ENCODE measurements at regions of chr17 and their contacts with region 1.

Region 1: GRCh38 chr17:79393358-79394202 is 217.3 kb downstream of the RBFOX3 start:
- DNase-seq: peak; percentile 43
- H3K4me3 ChIP-seq: no peak overlapping the region
- H3K27ac ChIP-seq: no peak overlapping the region
- H3K4me1 ChIP-seq: no peaks in the 10 kb centered on the region
- H3K27me3 ChIP-seq: peaks cover 5% of the 10 kb centered on the region
- CTCF ChIP-seq: peak; percentile 95 to 98

Region 2: DNA sequence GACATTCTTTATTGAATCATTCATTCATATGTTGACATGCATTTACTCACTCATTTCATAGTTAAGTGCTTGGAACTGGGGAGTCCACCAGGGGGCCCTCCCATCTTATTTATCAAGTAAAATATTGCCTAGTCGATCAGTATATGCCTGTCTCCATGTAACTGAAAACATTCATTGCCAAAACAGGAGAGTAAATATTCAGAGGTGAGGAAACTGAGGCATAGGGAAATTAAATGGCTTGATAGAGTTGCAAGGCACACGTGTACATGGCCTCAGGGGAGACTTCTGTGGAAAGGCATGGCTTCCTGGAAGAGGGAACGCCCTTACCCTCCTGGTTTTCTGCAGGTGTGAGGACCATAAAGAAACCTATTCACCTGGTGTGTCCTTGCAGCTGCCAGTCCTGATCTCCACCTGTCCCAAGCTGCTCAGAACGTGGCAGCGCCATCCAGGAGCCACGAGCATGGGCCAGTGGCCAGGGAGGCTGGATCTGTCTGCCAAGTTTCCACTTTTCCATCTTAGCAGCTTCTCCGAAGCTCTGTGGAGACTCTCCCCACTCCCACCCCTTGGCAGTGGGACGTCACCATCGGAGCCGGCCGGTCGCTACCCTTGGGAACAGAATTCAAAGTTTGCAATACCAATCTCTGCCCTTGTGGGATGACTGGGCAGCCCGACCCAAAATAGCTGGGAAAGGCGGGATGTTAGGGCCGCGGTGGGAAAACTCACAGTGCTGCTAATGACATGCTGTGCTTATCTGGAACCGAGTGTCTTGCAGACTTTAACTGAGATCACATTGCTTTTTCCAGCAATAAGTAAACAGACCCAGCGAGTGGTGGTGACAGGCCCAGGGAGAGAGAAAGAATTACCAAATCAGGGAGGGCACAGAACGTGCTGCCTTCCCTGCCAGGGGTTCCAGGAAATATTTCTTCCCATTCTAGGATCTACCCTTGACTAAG is 373.7 kb before region 1 on chr17:
- CTCF ChIA-PET with region 1: no interaction called
- dilution Hi-C with region 1: loop called (anchors 5 kb)
- in situ Hi-C with region 1: no loop called
- intact Hi-C with region 1: loop called (anchors 1 kb)
- DNase-seq: peak; percentile 53
- H3K4me3 ChIP-seq: no peak overlapping the region
- H3K27ac ChIP-seq: no peak overlapping the region
- H3K4me1 ChIP-seq: peaks cover 43% of the 10 kb centered on the region
- H3K27me3 ChIP-seq: no peaks in the 10 kb centered on the region
- CTCF ChIP-seq: peak; percentile 68 to 77

Region 3: DNA sequence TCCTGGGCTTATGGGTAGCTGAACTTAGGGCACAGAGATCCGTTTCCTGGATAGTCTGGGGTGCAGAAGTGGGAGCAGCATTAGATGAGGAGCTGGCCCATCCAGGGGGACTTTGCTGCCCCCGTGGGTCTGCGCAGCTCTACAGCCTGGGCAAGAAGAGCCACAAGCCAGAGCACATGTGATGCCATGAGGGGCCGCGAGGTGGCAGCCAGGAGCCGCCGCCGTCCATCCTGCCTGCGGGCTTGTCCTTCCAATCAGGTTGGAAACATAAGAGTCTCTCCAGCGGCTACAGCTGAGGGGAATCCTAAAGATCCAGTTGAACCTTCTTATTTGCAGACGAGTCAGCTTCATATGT is 347.8 kb before region 1 on chr17:
- CTCF ChIA-PET with region 1: no interaction called
- dilution Hi-C with region 1: no loop called
- in situ Hi-C with region 1: no loop called
- intact Hi-C with region 1: loop called (anchors 1 kb)
- DNase-seq: peak; percentile 48
- H3K4me3 ChIP-seq: no peak overlapping the region
- H3K27ac ChIP-seq: no peak overlapping the region
- H3K4me1 ChIP-seq: no peaks in the 10 kb centered on the region
- H3K27me3 ChIP-seq: no peaks in the 10 kb centered on the region
- CTCF ChIP-seq: peak; percentile 90 to 99

Region 4: DNA sequence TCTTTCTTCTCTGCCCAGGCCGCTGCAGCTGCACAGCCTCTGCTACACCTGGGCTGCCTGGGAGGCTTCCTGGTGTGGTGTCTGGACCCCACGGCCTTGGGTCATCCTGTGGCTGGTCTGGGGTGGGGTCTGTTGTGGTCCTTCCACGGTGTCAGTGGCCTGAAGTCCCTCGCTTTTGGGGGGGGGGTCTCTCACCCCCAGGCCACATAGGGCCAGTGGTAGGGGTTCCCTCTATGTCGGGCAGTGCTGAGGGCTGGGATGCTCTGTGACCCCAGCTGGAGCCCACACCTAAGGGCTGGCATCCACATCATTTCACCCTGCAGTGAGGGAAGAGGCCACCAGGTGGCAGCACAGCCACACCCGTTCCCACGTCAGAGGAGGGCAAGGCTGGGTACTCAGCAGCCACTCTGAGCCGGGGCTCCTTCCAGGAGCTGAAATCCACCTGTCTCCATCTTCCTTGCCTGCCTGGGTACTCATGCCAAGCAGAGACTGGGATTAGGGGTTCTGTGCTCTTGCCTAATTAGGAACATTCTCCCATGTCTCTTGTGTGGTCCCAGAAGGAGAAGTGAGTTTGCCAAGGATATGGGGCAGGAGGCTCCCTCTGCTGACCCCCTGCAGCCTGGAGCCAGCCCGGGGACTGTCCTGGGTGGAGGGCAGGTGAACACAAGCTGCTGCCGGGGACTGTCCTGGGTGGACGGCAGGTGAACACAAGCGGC is 306.0 kb before region 1 on chr17:
- CTCF ChIA-PET with region 1: interaction called, 8 read pairs
- dilution Hi-C with region 1: no loop called
- in situ Hi-C with region 1: loop called (anchors 10 kb)
- intact Hi-C with region 1: loop called (anchors 1 kb)
- DNase-seq: peak; percentile 21
- H3K4me3 ChIP-seq: no peak overlapping the region
- H3K27ac ChIP-seq: no peak overlapping the region
- H3K4me1 ChIP-seq: no peaks in the 10 kb centered on the region
- H3K27me3 ChIP-seq: no peaks in the 10 kb centered on the region
- CTCF ChIP-seq: peak; percentile 88

Region 5: GRCh38 chr17:79304884-79305283 is 88.7 kb before region 1 on chr17:
- CTCF ChIA-PET with region 1: no interaction called
- dilution Hi-C with region 1: loop called (anchors 5 kb)
- in situ Hi-C with region 1: no loop called
- intact Hi-C with region 1: no loop called
- DNase-seq: no peak
- H3K4me3 ChIP-seq: no peak overlapping the region
- H3K27ac ChIP-seq: no peak overlapping the region
- H3K4me1 ChIP-seq: no peaks in the 10 kb centered on the region
- H3K27me3 ChIP-seq: peaks cover 15% of the 10 kb centered on the region
- CTCF ChIP-seq: no peak

Measured in mammary epithelial cell (primary cell).